ENCODE measurements at regions of chr7 and their contacts with region 1.

Region 1: GRCh38 chr7:93147363-93147762 is 822 bp downstream of the SAMD9L start:
- DNase-seq: peak in 2 of 4 experiments; percentile 25 to 26
- ATAC-seq: peak; percentile 71
- H3K4me3 ChIP-seq: no peak overlapping the region
- H3K27ac ChIP-seq: peak overlapping the region; percentile 23; the same call in 1 of the 3 replicates
- H3K4me1 ChIP-seq: peaks cover 0 to 12% of the 10 kb centered on the region in 2 experiments; a peak in 1 of 5 replicates
- H3K27me3 ChIP-seq: peaks cover 0 to 4% of the 10 kb centered on the region in 2 experiments; a peak in 1 of 5 replicates
- CTCF ChIP-seq: no peak
- EP300 ChIP-seq: no peak
- POLR2A ChIP-seq: no peak
- RAD21 ChIP-seq: no peak

Region 2: GRCh38 chr7:93117852-93118530 is 29.4 kb before region 1 on chr7 and contains the start of gene SAMD9:
- CTCF ChIA-PET with region 1: no interaction called
- POLR2A ChIA-PET with region 1: no interaction called
- in situ Hi-C with region 1: no loop called
- intact Hi-C with region 1: loop called (anchors 2 kb)
- DNase-seq: peak in 2 of 4 experiments; percentile 67 to 82
- ATAC-seq: peak; percentile 96
- H3K4me3 ChIP-seq: peak within 1 kb of the TSS; percentile 26
- H3K27ac ChIP-seq: peak within 1 kb of the TSS; percentile 39; the same call in 1 of the 3 replicates
- H3K4me1 ChIP-seq: no peaks in the 10 kb centered on the region; a peak in 2 of 5 replicates
- H3K27me3 ChIP-seq: no peaks in the 10 kb centered on the region
- CTCF ChIP-seq: no peak
- EP300 ChIP-seq: no peak
- POLR2A ChIP-seq: no peak
- RAD21 ChIP-seq: no peak
- polyA plus RNA-seq, gene SAMD9: 1.1 to 1.3 TPM

Measured in K562 (cell line).